ENCODE measurements at regions of chr12 and their contacts with region 1.

Region 1: GRCh38 chr12:4663971-4664505 is 15.1 kb downstream of the NDUFA9 start:
- DNase-seq: no peak
- ATAC-seq: no peak

Region 2: DNA sequence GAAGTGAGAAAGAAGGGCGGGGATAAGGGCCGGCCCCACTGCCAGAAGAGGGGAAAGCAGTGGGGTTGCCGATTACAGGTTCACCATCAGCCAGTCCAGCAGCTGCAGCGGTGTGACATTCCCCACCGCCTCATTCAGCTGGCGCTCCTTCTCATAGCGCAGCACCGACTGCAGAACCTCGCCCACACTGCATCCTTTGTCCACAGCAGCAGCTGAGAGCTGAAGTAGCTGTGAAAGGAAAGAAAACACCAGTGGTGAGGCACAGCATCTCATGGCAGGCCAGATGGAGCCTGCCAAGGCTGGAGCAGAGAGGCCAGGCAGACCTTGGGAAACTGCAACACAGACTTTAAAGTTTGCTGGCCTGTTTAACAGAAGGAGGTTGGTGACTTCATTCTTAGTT is 48.4 kb before region 1 on chr12:
- intact Hi-C with region 1: no loop called
- DNase-seq: no peak
- ATAC-seq: no peak

Region 3: DNA sequence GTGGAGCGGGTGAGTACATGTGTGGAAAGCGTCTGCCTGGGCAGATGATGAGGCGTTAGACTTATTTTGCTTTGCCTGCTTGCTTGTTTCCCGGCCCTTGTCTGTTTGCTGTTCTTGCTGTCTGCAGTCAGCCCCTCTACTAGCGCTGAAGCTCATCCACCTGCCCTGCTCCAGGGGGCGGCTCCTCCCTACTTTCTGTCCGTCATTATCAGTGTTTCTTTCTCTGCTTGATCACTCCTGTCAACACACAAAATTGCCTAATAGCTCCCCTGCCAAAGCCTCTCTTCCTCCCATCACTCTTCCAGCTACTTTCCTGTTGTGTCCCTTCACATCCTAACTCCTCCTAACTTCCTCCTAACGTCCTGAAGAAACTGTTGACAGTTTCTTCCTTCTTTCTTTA is 21.3 kb after region 1 on chr12:
- intact Hi-C with region 1: loop called (anchors 2 kb)
- DNase-seq: no peak
- ATAC-seq: peak; percentile 72

Measured in Right ventricle myocardium inferior (tissue), 1 donor.